ENCODE measurements at regions of chr12 and their contacts with region 1.

Region 1: GRCh38 chr12:109170324-109170723 is 53.9 kb downstream of the ACACB start:
- DNase-seq: no peak
- ATAC-seq: no peak

Region 2: DNA sequence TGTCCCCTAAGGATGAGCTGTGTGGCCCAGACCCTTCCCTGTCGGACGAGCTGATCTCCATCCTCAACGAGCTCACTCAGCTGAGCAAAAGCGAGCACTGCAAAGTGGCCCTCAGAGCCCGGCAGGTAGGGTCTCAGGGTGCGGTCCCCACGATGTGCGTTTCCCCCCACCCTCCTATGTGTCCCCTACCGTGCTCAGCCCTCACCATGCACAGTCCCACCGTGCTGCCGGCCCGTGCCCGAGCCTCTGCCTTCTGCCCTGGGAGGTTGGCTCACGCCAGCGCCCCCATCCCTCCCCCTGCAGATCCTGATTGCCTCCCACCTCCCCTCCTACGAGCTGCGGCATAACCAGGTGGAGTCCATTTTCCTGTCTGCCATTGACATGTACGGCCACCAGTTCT is 52.2 kb after region 1 on chr12:
- intact Hi-C with region 1: loop called (anchors 10 kb)
- DNase-seq: no peak
- ATAC-seq: peak; percentile 13